Activated CD4-positive, alpha-beta memory T cell treated with anti-CD3 and anti-CD28 coated beads for 36 hours (primary cell): ENCODE measurements at regions of chr13 and their contacts with region 1.

Region 1: DNA sequence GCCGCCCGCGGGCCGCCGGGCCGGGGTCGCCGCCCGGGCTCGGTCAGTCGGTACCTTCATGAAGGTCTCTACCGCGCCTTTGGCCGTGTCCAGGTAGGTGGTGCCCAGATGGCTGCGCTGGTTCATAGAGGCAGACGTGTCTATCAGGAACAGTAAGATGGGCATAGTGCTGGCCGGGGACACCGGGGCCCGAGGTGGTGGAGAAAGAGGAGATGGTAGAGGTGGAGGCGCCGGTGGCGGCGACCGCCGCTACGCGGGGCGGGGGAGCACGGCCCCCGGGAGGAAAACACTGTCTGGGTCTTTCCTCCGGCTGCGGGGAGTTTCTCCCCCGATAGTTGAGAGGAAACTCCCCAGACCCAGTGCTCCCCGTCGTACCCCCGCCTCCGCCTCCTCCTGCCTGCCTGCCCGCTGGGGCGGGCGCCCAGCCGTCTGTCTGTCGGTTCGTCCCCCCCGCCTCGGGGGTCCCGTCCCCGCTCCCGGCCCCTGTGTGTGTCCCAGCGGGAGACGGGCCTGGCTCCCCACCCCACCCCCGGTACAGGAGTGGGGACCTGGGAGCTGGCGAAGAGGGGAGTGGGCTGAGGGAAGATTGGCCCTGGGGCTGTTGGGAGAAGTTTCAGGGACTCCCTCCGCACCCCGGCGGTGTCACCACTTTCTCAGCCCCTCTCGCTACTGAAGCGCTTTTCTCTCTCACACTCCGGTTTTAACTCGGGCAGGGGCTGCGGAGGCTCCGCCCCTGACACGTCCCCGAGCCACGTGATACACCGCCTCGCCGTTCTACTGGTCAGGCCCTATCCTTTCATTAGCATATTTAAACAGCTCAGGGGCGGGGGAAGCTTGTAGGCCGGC is at the start of gene INTS6:
- DNase-seq: peak; percentile 99
- H3K4me3 Mint-ChIP-seq: peak within 1 kb of the TSS; percentile 92
- H3K27ac Mint-ChIP-seq: peak within 1 kb of the TSS; percentile 98
- H3K4me1 Mint-ChIP-seq: peaks cover 35% of the 10 kb centered on the region
- H3K27me3 Mint-ChIP-seq: peaks cover 1% of the 10 kb centered on the region
- total RNA-seq, gene INTS6: 44.4 to 47.1 TPM

Region 2: DNA sequence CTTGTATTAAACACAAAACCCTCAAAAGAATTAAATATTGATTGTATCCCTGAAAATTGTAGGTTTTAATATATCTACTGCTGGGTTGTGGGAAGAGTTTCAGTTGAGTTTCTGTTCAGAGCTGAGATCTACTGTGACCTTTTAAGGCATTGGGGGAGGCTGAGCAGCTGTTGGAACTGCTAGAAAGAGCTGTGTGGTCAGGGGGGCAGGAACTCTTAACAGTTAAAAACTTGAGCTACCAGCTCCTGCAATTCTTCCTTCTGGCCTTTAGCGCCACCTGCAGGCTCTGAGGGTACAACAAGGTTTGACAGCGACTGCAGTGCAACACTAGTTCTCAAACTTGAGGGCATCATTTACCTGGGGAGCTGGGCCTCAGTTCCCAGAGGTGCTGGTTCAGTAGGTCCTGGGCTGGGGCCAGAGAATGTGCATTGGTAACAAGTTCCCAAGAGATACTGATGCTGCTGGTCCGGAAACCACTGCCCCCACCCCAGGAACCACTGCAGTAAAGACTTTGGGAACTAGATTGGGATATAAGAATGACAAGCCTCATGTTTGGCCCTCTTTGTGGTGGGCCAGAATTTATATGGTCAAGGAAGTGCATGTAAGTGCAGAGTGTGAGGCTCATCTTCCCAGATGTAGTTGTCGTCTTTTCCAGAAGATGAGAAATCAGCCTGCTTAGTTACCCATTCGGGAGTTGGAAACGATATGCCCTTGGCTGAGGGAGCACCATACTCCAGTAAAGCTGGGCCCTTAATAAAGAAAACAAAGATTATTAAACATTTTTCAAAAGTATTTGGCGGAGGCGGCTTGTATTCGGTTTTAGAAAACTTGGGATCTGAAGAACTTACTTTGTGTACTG is 540.4 kb before region 1 on chr13:
- CTCF ChIA-PET with region 1: no interaction called
- POLR2A ChIA-PET with region 1: no interaction called
- intact Hi-C with region 1: loop called (anchors 5 kb)
- DNase-seq: peak; percentile 95
- H3K4me3 Mint-ChIP-seq: peak overlapping the region; percentile 94
- H3K27ac Mint-ChIP-seq: peak overlapping the region; percentile 98
- H3K4me1 Mint-ChIP-seq: peaks cover 51% of the 10 kb centered on the region
- H3K27me3 Mint-ChIP-seq: no peaks in the 10 kb centered on the region

Region 3: DNA sequence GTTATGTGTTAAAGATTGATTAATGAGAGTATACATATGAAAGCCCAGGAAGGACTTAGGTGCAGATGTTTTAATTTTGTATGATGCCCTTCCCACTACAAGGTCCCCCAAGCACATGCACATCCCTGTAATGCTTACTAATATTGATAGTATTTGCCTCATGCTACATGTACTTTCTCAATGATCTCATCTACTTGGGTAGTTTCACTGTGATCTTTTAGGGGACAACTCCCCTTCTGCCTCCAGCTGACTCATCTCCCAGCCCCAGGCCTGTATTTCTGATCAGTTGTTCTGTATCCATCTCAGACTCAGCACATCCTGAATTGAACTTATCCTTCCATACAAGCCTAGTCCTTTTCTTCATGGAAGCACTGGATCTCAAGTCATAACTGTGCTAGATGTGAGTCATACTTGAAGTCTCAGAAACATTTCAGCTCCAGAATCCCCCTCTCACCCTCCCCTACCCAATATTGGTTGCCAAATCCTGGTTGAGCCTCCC is 49.6 kb after region 1 on chr13:
- CTCF ChIA-PET with region 1: no interaction called
- POLR2A ChIA-PET with region 1: interaction called, 8 read pairs
- intact Hi-C with region 1: loop called (anchors 1 kb)
- DNase-seq: peak; percentile 63
- H3K4me3 Mint-ChIP-seq: no peak overlapping the region
- H3K27ac Mint-ChIP-seq: no peak overlapping the region
- H3K4me1 Mint-ChIP-seq: peaks cover 31% of the 10 kb centered on the region
- H3K27me3 Mint-ChIP-seq: peaks cover 11% of the 10 kb centered on the region

Region 4: DNA sequence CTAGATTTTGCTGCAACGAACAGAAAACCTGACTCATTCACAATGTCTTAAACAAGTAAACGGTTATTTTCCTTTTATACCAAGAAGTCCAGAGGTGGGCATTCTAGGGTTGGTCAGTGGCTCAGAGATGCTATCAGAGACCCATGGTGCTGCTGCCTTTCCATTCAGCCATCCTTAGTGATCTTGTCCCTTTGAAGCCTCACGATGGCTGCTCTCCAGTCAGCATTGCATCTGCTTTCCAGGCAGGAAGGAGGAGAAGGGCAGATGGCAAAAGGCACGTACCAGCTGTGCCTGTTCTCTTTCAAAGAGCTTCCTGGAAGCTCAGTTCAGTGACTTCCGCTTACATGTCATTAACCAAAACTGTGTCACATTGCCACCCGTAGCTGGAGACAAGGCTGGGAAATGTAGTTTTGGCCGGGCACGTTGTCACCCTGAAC is 161.8 kb after region 1 on chr13:
- CTCF ChIA-PET with region 1: no interaction called
- POLR2A ChIA-PET with region 1: interaction called, 11 read pairs
- intact Hi-C with region 1: loop called (anchors 1 kb)
- DNase-seq: peak; percentile 66
- H3K4me3 Mint-ChIP-seq: peak overlapping the region; percentile 75
- H3K27ac Mint-ChIP-seq: peak overlapping the region; percentile 93
- H3K4me1 Mint-ChIP-seq: peaks cover 22% of the 10 kb centered on the region
- H3K27me3 Mint-ChIP-seq: no peaks in the 10 kb centered on the region

Region 5: GRCh38 chr13:51797664-51798488 is 345.3 kb after region 1 on chr13:
- CTCF ChIA-PET with region 1: interaction called, 26 read pairs
- POLR2A ChIA-PET with region 1: interaction called, 17 read pairs
- intact Hi-C with region 1: loop called (anchors 1 kb)
- DNase-seq: peak; percentile 76
- H3K4me3 Mint-ChIP-seq: no peak overlapping the region
- H3K27ac Mint-ChIP-seq: no peak overlapping the region
- H3K4me1 Mint-ChIP-seq: peaks cover 43% of the 10 kb centered on the region
- H3K27me3 Mint-ChIP-seq: no peaks in the 10 kb centered on the region

Region 6: DNA sequence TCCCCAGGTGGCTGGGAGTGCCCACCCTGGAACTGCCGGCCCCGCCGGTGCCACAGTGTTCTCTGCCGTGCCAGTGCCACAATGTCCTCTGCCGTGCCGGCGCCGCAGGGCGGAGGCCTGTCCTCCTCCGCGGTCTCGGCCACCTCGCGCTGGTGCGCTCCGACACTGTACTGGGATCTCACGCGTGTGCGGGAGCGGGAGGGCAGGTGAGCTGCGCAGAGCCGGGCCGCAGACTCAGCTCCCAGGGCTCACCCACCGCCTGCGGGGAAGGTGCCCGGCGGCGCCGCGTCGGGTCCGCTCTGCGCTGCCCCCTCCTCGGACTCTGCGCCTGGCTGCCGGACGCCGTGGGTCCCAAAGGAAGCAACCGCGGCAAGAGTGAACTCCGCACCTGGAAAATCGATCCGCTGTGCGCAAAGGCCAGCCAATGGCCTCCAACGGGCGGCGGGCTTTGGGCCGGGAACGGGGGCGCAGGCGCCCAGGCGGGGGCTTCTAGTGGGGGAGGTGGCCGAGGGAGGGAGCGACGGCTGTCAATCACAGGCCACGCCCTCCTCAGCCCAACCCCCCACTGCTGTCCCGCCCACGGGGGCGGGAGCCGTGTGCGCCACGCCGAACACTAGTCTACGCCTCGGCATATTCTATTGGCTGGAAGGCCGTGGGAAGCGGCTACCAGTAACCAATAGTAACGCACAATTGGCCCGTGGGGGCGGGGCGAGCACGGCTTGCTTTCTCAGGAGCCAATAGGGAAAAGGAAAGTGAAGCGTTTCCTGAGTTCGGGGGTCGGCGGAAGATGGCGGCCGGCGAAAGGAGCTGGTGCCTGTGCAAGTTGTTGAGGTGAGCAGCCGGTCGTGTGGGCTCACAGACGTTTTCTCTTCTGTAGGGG is 559.3 kb after region 1 on chr13 and contains the start of gene ALG11:
- CTCF ChIA-PET with region 1: no interaction called
- POLR2A ChIA-PET with region 1: no interaction called
- intact Hi-C with region 1: loop called (anchors 2 kb)
- DNase-seq: peak; percentile 100
- H3K4me3 Mint-ChIP-seq: peak within 1 kb of the TSS; percentile 99
- H3K27ac Mint-ChIP-seq: peak within 1 kb of the TSS; percentile 83
- H3K4me1 Mint-ChIP-seq: peaks cover 9% of the 10 kb centered on the region
- H3K27me3 Mint-ChIP-seq: peaks cover 18% of the 10 kb centered on the region
- total RNA-seq, gene ALG11: 19.0 to 19.5 TPM

Region 7: DNA sequence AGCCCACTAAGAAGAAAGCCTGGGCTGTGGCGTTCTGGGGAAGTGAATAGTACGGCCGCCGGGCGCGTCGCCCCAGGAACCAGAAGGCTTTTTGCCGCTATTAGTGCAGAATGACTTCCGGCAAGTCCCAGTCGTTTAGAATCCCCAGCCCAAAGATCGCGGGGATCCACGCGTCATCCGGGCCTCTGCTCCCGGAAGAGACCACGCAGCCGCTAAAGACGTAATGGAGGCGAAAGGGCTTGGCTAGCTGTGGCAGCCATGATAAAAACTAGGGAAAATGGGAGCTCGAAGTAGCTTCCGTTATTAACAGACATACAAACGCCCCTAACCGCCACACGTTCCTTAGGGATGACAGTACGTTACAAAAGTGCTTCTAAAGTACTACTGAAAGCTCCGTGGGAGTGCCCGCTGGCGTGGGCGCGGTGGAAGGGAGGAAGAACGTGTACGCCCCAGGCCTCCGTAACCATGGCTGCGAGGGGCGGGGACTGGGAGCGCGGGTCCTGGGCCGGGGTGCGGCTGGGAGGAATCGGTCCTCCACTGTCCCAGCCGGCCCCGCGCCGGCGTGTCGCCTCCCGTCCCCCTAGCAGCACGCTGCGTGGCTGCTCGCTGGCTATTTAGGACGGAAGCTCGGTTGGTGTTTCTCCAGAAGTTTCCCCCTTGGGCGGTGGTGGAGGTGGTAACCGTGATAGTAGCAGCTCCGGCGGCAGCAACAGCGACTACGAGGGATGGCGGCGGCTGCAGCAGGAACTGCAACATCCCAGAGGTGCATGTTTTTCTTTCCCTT is 1199.8 kb after region 1 on chr13 and contains the start of gene SUGT1:
- CTCF ChIA-PET with region 1: no interaction called
- POLR2A ChIA-PET with region 1: no interaction called
- intact Hi-C with region 1: loop called (anchors 2 kb)
- DNase-seq: peak; percentile 96
- H3K4me3 Mint-ChIP-seq: no peak within 1 kb of the TSS
- H3K27ac Mint-ChIP-seq: no peak within 1 kb of the TSS
- H3K4me1 Mint-ChIP-seq: peaks cover 16% of the 10 kb centered on the region
- H3K27me3 Mint-ChIP-seq: no peaks in the 10 kb centered on the region
- total RNA-seq, gene SUGT1: 63.1 to 64.0 TPM